Left ventricle myocardium inferior (tissue), 1 donor: ENCODE measurements at regions of chr4 and their contacts with region 1.

Region 1: GRCh38 chr4:2954358-2955185 is 8.6 kb downstream of the NOP14 start:
- DNase-seq: no peak
- H3K4me3 ChIP-seq: no peak overlapping the region
- H3K27ac ChIP-seq: no peak overlapping the region
- H3K4me1 ChIP-seq: peaks cover 21% of the 10 kb centered on the region
- H3K27me3 ChIP-seq: no peaks in the 10 kb centered on the region
- CTCF ChIP-seq: no peak

Region 2: GRCh38 chr4:2761035-2761923 is 193.3 kb before region 1 on chr4:
- intact Hi-C with region 1: loop called (anchors 10 kb)
- DNase-seq: no peak
- H3K4me3 ChIP-seq: no peak overlapping the region
- H3K27ac ChIP-seq: no peak overlapping the region
- H3K4me1 ChIP-seq: peaks cover 26% of the 10 kb centered on the region
- H3K27me3 ChIP-seq: no peaks in the 10 kb centered on the region
- CTCF ChIP-seq: peak; percentile 24